ENCODE measurements at regions of chr14 and their contacts with region 1.

Region 1: DNA sequence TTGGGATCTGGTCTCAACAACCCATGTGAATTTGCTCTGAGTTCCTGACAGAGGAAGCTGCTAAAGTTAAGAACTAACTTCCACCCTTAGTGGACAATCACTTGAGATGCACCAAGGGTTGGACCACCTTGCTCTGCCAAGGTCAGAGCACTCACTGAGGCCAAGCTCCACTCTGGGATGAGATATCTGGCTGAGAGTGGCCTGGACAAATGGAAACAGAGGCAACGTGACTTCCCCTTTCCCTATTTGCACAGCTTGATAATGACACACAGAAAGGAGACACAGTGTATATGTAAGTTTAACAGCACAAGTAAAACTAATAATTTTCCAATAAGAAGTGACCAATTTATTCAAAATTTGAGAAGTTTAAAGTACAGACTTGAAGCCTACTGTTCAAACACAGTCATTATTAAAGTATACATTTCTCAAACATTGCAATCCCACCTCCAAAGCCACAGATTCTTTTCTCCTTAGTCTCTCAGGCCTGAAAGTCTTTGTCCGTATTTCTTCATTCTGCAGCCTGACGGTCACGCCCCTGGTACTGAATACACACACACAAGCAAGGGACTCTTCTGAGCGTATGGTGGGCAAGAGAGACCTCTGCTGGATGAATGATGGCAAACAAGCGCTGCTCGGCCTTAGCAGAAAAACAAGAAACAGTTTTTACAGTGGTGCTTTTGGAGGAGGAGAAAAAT is 28.6 kb downstream of the TMEM30B start:
- DNase-seq: peak; percentile 87
- H3K4me3 ChIP-seq: no peak overlapping the region
- H3K27me3 ChIP-seq: no peaks in the 10 kb centered on the region
- CTCF ChIP-seq: peak; percentile 90

Region 2: DNA sequence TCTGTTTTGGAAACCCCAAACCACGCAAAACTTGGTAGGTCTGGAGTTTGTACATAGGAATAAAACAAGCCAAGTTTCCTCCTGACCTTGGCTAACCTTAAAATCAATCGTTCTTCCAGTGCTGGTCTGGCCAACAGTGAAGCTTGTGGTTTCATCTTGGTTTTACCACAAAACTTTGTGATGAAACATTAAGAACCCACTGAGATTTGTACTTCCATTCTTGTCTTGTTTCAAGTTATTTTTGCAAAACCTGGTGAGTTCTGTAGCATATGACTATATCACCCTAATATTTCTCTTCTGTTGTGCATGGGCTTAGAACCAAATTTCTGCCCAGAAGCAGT is 629.6 kb before region 1 on chr14:
- CTCF ChIA-PET with region 1: interaction called, 26 read pairs
- POLR2A ChIA-PET with region 1: no interaction called
- DNase-seq: no peak
- H3K4me3 ChIP-seq: no peak overlapping the region
- H3K27me3 ChIP-seq: no peaks in the 10 kb centered on the region
- CTCF ChIP-seq: no peak

Region 3: GRCh38 chr14:61147831-61148549 is 104.5 kb before region 1 on chr14:
- CTCF ChIA-PET with region 1: interaction called, 12 read pairs
- POLR2A ChIA-PET with region 1: no interaction called
- DNase-seq: peak; percentile 74
- H3K4me3 ChIP-seq: no peak overlapping the region
- H3K27me3 ChIP-seq: no peaks in the 10 kb centered on the region
- CTCF ChIP-seq: no peak

Region 4: DNA sequence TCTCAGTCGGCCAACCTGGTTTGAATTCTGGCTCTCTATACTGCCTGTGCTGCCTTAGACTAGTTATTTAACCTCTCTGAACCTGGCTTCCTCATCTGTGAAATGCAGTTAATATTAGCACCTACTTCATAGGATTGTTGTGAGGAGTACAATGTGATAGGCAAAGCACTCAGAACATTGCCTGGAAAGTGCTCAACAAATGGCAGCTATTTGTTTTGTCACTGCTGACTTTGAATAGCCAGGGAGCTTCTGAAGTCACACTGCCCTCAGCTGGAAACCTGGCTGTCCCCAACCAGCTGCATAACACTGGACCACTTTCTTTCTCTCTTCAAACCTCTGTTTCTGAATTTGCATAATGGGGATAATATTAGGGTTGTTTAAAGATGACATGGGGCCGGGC is 19.0 kb after region 1 on chr14:
- CTCF ChIA-PET with region 1: no interaction called
- POLR2A ChIA-PET with region 1: no interaction called
- DNase-seq: no peak
- H3K4me3 ChIP-seq: no peak overlapping the region
- H3K27me3 ChIP-seq: peaks cover 2% of the 10 kb centered on the region; the same call in 1 of the 2 replicates
- CTCF ChIP-seq: no peak

Region 5: DNA sequence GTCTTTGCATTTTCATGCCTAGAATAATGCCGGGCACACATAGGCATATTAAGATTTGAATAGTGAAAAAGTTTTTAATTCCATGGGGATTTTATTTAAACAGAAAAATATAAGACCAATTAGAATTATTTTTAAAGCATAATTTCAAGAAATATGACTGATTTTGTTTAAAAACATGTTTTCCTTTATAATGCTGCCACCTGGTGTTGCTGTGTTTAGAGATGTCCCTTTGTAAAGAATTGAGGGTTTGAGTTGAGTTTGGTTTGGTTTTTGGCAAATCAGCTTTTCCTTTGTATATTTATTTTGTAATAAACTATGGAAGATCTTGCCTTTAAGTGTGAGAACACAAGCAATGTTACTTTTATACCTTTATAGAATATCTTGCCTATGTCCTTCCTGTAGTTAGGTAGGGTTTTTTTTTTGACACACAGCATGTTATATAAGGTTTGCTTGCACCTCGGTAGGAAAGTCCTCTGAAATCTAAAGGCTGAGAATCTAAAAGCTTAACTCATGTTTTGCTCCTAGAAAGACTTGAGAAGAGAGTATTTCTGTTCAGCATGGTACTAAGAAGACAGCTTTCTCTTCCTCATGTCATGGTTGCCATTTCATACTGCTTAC is 478.3 kb after region 1 on chr14:
- CTCF ChIA-PET with region 1: no interaction called
- POLR2A ChIA-PET with region 1: no interaction called
- DNase-seq: no peak
- H3K4me3 ChIP-seq: no peak overlapping the region
- H3K27me3 ChIP-seq: no peaks in the 10 kb centered on the region
- CTCF ChIP-seq: peak; percentile 39